Endothelial cell of umbilical vein (primary cell): ENCODE measurements at regions of chr3 and their contacts with region 1.

Region 1: DNA sequence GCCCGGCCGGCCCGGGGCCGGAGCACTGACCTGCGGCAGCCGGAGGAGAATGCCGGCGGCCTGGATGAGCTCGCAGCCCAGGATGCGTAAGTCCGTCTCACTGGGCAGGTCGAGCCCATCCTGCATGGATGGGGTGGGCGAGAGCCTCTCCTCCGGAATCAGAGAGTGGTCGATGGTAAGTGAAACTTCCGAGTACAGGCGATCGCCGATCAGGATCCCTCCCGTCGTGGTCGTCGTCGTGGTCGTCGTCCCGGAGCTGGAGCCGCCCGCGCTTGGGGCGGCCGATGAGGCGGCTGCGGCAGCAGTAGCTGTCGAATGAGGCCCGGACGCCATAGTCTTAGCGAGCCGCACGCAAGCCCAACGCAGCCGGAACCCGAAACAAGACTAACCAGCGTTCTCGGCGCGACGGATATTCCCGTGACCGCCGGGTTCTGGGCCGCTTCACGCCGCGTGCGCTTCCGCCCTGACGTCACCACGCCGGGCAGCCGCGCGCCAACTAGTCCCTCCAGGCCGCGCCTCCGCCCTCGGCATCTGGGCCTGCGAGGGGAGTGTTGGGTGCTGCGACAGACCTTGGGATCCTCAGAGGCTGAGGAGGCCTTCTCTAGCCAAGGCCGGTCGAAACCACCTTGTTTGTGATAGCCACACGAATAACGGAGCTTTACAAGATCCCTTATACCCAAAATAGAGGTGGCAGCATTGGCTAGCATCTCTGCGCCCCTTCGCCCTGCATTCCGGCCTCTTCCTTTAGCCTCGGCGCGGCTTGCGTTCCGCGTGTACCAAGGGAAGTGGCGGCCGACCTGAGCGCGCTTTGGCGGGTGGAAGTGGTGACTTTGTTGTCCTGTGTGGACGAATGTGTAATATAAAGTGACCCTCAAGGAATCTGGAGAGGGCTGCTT is at the start of gene CCNL1:
- DNase-seq: peak; percentile 96
- H3K4me3 ChIP-seq: peak within 1 kb of the TSS; percentile 41 to 97 (median 66)
- H3K27ac ChIP-seq: peak within 1 kb of the TSS; percentile 94
- H3K4me1 ChIP-seq: peaks cover 50% of the 10 kb centered on the region
- H3K27me3 ChIP-seq: no peaks in the 10 kb centered on the region
- CTCF ChIP-seq: no peak
- POLR2A ChIP-seq: peak; percentile 98
- total RNA-seq, gene CCNL1: 116 and 119 TPM in 2 replicates

Region 2: DNA sequence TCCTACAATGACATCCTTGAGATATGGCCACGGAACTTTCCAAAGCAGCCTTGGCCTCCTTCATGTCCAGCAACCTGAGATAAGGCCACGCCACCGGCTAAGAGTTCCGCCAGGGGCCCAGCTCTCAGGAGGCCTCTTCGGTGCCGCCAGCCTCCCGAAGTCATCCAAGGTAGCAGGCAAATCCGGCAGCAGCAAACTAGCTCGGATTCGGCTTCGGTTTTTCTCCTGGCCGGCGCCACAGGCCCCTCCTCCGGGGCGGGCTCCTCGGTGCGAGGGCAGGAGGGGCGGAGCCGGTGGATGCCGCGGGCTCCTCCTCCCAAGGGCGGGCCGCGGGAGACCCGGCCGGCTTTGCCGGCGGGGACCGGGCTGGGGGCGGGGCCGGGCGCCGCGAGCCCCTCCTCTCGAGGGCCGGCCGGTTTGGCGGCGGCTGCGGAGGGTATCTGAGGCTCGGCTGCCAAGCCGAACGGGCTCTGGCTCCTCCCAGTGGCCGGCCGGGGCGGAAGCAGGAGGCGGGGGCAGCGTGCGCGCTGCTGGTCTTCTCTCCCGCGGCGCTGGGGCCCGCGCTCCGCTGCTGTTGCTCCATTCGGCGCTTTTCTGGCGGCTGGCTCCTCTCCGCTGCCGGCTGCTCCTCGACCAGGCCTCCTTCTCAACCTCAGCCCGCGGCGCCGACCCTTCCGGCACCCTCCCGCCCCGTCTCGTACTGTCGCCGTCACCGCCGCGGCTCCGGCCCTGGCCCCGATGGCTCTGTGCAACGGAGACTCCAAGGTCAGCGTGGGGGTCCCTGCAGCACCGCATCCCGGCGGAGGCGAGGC is 1289.7 kb before region 1 on chr3 and contains the start of gene GMPS:
- CTCF ChIA-PET with region 1: no interaction called
- POLR2A ChIA-PET with region 1: no interaction called
- dilution Hi-C with region 1: no loop called
- intact Hi-C with region 1: loop called (anchors 10 kb)
- DNase-seq: peak; percentile 96
- H3K4me3 ChIP-seq: peak within 1 kb of the TSS; percentile 93 to 98 (median 96)
- H3K27ac ChIP-seq: peak within 1 kb of the TSS; percentile 79
- H3K4me1 ChIP-seq: peaks cover 20% of the 10 kb centered on the region
- H3K27me3 ChIP-seq: no peaks in the 10 kb centered on the region
- CTCF ChIP-seq: peak; percentile 8 to 33
- POLR2A ChIP-seq: peak; percentile 59
- total RNA-seq, gene GMPS: 66.0 and 67.5 TPM in 2 replicates

Region 3: DNA sequence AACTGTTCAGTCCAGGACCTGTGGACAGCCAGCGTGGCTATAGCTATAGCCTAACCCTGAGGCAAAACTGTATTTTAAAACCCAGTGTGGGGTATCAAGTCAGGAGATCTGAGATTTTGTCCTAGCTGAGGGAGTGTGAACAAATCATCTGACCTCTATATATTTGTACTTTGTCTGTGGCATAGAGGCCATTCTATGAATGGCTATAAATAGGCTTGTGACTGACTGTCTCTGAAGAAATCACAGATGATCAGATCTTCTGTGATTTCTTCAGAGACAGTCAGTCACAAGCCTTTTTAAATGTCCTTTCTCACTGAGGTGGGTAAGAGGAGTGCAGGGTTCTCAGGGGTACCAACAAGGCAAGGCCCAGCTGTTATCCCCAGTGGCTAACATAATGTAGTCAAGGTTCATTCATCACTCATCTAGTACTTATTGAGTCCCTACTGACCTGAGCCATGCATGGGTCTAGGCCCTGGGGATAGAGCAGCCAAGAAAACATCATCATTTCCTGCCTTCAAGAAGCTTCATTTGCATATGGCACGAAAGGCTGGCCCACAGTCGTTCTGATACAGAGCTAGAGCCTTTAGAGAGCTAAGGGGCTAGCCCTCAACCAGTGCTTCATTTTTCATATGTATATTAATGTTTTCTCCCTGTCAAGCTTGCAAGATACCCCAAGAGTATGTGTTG is 432.3 kb before region 1 on chr3:
- CTCF ChIA-PET with region 1: no interaction called
- POLR2A ChIA-PET with region 1: no interaction called
- dilution Hi-C with region 1: no loop called
- intact Hi-C with region 1: no loop called
- DNase-seq: no peak
- H3K4me3 ChIP-seq: no peak overlapping the region
- H3K27ac ChIP-seq: no peak overlapping the region
- H3K4me1 ChIP-seq: no peaks in the 10 kb centered on the region
- H3K27me3 ChIP-seq: no peaks in the 10 kb centered on the region
- CTCF ChIP-seq: no peak
- POLR2A ChIP-seq: no peak

Region 4: GRCh38 chr3:156899951-156900350 is 260.1 kb before region 1 on chr3:
- CTCF ChIA-PET with region 1: no interaction called
- POLR2A ChIA-PET with region 1: no interaction called
- dilution Hi-C with region 1: no loop called
- intact Hi-C with region 1: no loop called
- DNase-seq: no peak
- H3K4me3 ChIP-seq: no peak overlapping the region
- H3K27ac ChIP-seq: no peak overlapping the region
- H3K4me1 ChIP-seq: no peaks in the 10 kb centered on the region
- H3K27me3 ChIP-seq: no peaks in the 10 kb centered on the region
- CTCF ChIP-seq: no peak
- POLR2A ChIP-seq: no peak

Region 5: GRCh38 chr3:156964577-156964976 is 195.4 kb before region 1 on chr3:
- CTCF ChIA-PET with region 1: no interaction called
- POLR2A ChIA-PET with region 1: no interaction called
- dilution Hi-C with region 1: no loop called
- intact Hi-C with region 1: no loop called
- DNase-seq: no peak
- H3K4me3 ChIP-seq: no peak overlapping the region
- H3K27ac ChIP-seq: no peak overlapping the region
- H3K4me1 ChIP-seq: no peaks in the 10 kb centered on the region
- H3K27me3 ChIP-seq: no peaks in the 10 kb centered on the region
- CTCF ChIP-seq: no peak
- POLR2A ChIP-seq: no peak

Region 6: GRCh38 chr3:157174649-157175498 is 14.9 kb after region 1 on chr3:
- CTCF ChIA-PET with region 1: interaction called, 28 read pairs
- POLR2A ChIA-PET with region 1: interaction called, 105 read pairs
- dilution Hi-C with region 1: no loop called
- intact Hi-C with region 1: loop called (anchors 1 kb)
- DNase-seq: peak; percentile 99
- H3K4me3 ChIP-seq: peak overlapping the region; percentile 37 to 97 (median 90)
- H3K27ac ChIP-seq: peak overlapping the region; percentile 98
- H3K4me1 ChIP-seq: peaks cover 16% of the 10 kb centered on the region
- H3K27me3 ChIP-seq: no peaks in the 10 kb centered on the region
- CTCF ChIP-seq: no peak
- POLR2A ChIP-seq: peak; percentile 95

Region 7: GRCh38 chr3:157239082-157239704 is 79.2 kb after region 1 on chr3:
- CTCF ChIA-PET with region 1: no interaction called
- POLR2A ChIA-PET with region 1: no interaction called
- dilution Hi-C with region 1: no loop called
- intact Hi-C with region 1: loop called (anchors 5 kb)
- DNase-seq: peak; percentile 57
- H3K4me3 ChIP-seq: no peak overlapping the region
- H3K27ac ChIP-seq: no peak overlapping the region
- H3K4me1 ChIP-seq: peaks cover 15% of the 10 kb centered on the region
- H3K27me3 ChIP-seq: no peaks in the 10 kb centered on the region
- CTCF ChIP-seq: peak; percentile 71 to 79
- POLR2A ChIP-seq: no peak

Region 8: DNA sequence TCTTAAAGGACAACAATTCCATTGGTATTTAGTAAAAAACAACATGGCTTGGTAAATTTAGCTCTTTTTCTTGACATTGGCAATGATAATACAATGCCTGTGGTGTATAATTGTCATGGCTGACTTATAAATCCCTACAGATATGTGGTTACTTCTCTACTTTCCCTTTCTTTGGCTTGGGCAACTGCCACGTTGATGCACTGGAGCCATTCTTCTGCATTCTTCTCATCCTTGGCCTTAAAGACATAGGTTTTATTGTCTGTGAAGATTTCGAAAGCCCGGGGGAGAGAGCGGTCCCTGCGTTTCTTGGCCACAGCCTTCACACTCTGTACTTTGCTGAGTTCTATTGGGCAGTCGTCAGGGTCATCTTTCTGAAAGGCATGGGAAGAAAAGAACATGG is 101.0 kb after region 1 on chr3:
- CTCF ChIA-PET with region 1: no interaction called
- POLR2A ChIA-PET with region 1: no interaction called
- dilution Hi-C with region 1: no loop called
- intact Hi-C with region 1: loop called (anchors 5 kb)
- DNase-seq: no peak
- H3K4me3 ChIP-seq: no peak overlapping the region
- H3K27ac ChIP-seq: no peak overlapping the region
- H3K4me1 ChIP-seq: peaks cover 17% of the 10 kb centered on the region
- H3K27me3 ChIP-seq: no peaks in the 10 kb centered on the region
- CTCF ChIP-seq: no peak
- POLR2A ChIP-seq: no peak

Region 9: GRCh38 chr3:157354722-157355121 is 194.7 kb after region 1 on chr3:
- CTCF ChIA-PET with region 1: no interaction called
- POLR2A ChIA-PET with region 1: no interaction called
- dilution Hi-C with region 1: no loop called
- intact Hi-C with region 1: loop called (anchors 5 kb)
- DNase-seq: peak; percentile 64
- H3K4me3 ChIP-seq: no peak overlapping the region
- H3K27ac ChIP-seq: peak overlapping the region; percentile 8
- H3K4me1 ChIP-seq: peaks cover 41% of the 10 kb centered on the region
- H3K27me3 ChIP-seq: no peaks in the 10 kb centered on the region
- CTCF ChIP-seq: peak; percentile 47 to 62
- POLR2A ChIP-seq: no peak

Region 10: GRCh38 chr3:157493627-157494550 is 333.9 kb after region 1 on chr3:
- CTCF ChIA-PET with region 1: interaction called, 5 read pairs
- POLR2A ChIA-PET with region 1: no interaction called
- dilution Hi-C with region 1: no loop called
- intact Hi-C with region 1: loop called (anchors 2 kb)
- DNase-seq: peak; percentile 81
- H3K4me3 ChIP-seq: no peak overlapping the region
- H3K27ac ChIP-seq: peak overlapping the region; percentile 8
- H3K4me1 ChIP-seq: no peaks in the 10 kb centered on the region
- H3K27me3 ChIP-seq: no peaks in the 10 kb centered on the region
- CTCF ChIP-seq: peak; percentile 28 to 31
- POLR2A ChIP-seq: no peak